AG04450 (cell line): ENCODE measurements at regions of chr11 and their contacts with region 1.

Region 1: DNA sequence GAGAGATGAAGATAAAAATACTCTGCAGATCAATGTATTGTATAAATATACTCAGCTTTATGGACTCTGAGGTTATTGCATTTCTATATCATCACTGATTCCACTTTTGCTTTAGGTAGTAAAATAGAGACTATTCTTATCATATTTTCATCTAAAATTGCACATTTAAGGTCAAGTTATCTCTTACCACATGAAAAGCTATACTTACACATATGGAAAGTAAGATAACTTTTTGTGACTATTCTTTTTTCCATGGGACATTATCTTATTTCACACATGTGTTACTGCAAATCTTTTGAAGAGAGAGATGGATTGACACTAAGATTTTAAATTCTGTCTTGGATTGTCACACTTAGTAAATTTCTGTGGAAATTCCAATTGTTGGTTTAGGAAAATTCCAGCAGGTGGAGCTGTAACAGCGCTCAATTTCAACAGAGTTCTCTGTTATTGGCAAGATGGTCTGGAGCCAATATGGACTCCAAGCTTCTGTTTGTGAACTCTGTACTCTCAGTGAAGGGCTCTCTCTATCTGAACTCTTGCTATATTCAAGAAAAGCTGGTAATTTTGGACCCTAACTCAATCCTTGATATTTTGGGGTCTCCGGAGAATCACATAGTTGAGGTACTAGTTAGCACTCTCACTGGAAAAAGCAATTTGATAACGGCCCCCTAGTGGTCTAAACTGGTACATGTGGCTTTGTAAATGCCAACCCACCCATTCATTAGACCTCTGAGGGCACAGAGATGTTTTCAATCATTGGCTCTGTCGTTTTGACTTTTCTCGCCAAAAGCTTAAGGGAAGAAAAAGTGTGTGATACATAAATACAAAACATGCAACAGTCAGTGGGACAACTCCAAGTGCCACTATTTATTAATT is 429.7 kb downstream of the ETS1 start:
- DNase-seq: peak; percentile 41
- H3K4me3 ChIP-seq: peak overlapping the region; percentile 38; the same call in 1 of the 2 replicates
- H3K27ac ChIP-seq: no peak overlapping the region
- H3K27me3 ChIP-seq: peaks cover 12% of the 10 kb centered on the region
- CTCF ChIP-seq: peak; percentile 82

Region 2: DNA sequence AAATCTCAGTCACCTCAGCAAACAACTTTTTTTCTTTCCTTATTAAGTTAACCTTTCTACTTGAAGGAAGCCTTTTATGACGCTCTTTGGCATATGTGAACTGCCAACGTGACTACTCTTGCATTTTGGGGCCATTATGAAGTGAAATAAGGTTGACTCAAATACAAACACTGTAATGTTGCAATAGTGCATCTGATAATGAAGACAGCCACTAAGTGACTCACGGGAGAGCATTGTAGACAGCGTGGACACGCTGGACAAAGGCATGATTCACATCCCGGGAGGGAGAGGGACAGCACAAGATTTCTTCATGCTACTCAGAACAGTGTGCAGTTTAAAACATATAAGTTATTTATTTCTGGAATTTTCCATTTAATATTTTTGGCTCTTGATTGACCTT is 131.1 kb before region 1 on chr11:
- CTCF ChIA-PET with region 1: interaction called, 170 read pairs
- POLR2A ChIA-PET with region 1: no interaction called
- DNase-seq: peak; percentile 76
- H3K4me3 ChIP-seq: no peak overlapping the region
- H3K27ac ChIP-seq: no peak overlapping the region
- H3K27me3 ChIP-seq: no peaks in the 10 kb centered on the region
- CTCF ChIP-seq: no peak

Region 3: GRCh38 chr11:128089962-128090361 is 67.7 kb before region 1 on chr11:
- CTCF ChIA-PET with region 1: no interaction called
- POLR2A ChIA-PET with region 1: no interaction called
- DNase-seq: no peak
- H3K4me3 ChIP-seq: no peak overlapping the region
- H3K27ac ChIP-seq: no peak overlapping the region
- H3K27me3 ChIP-seq: no peaks in the 10 kb centered on the region
- CTCF ChIP-seq: no peak

Region 4: DNA sequence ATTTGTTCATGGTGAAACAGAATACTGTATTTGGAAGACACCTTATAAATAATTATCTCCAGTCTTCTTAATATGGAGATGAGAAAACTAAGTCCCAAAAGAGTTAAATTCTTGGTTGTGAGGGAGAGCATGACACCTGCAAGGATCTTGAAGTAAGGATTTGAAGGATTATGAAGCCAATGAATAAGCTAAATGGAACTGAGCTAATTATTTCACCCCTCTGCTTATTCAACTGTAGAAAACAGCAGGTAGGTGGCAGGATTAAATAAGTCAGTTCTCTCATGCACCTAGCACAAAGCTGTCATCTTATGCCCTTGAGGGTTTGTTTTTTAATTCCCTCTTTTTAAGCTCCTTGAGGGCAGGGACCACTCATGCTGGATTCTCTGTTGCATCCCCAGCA is 27.6 kb before region 1 on chr11:
- CTCF ChIA-PET with region 1: interaction called, 13 read pairs
- POLR2A ChIA-PET with region 1: no interaction called
- DNase-seq: no peak
- H3K4me3 ChIP-seq: no peak overlapping the region
- H3K27ac ChIP-seq: no peak overlapping the region
- H3K27me3 ChIP-seq: peaks cover 2% of the 10 kb centered on the region
- CTCF ChIP-seq: no peak

Region 5: DNA sequence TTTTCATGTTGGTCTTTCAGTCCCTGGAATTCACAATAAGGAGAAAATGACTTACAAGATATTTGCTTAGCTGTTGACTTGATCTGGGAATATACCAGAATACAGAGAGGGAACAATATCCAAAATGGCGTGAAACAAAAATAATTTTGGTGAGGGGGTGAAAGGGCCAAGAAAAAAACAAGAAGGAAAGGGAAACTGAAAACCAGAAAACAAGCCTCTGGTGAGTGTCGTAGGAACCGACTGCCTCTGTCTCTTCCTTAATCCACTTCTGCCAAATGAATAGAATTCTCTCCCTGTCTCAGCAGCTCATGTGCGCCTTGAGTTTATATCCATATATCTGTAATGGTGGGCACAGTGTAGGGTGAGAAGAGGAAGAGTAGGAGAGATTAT is 62.1 kb after region 1 on chr11:
- CTCF ChIA-PET with region 1: interaction called, 13 read pairs
- POLR2A ChIA-PET with region 1: no interaction called
- DNase-seq: no peak
- H3K4me3 ChIP-seq: no peak overlapping the region
- H3K27ac ChIP-seq: no peak overlapping the region
- H3K27me3 ChIP-seq: no peaks in the 10 kb centered on the region
- CTCF ChIP-seq: no peak

Region 6: GRCh38 chr11:128630367-128631230 is 472.9 kb after region 1 on chr11:
- CTCF ChIA-PET with region 1: interaction called, 131 read pairs
- POLR2A ChIA-PET with region 1: no interaction called
- DNase-seq: peak; percentile 76
- H3K4me3 ChIP-seq: no peak overlapping the region
- H3K27ac ChIP-seq: no peak overlapping the region
- H3K27me3 ChIP-seq: peaks cover under 1% of the 10 kb centered on the region
- CTCF ChIP-seq: peak; percentile 94

Region 7: DNA sequence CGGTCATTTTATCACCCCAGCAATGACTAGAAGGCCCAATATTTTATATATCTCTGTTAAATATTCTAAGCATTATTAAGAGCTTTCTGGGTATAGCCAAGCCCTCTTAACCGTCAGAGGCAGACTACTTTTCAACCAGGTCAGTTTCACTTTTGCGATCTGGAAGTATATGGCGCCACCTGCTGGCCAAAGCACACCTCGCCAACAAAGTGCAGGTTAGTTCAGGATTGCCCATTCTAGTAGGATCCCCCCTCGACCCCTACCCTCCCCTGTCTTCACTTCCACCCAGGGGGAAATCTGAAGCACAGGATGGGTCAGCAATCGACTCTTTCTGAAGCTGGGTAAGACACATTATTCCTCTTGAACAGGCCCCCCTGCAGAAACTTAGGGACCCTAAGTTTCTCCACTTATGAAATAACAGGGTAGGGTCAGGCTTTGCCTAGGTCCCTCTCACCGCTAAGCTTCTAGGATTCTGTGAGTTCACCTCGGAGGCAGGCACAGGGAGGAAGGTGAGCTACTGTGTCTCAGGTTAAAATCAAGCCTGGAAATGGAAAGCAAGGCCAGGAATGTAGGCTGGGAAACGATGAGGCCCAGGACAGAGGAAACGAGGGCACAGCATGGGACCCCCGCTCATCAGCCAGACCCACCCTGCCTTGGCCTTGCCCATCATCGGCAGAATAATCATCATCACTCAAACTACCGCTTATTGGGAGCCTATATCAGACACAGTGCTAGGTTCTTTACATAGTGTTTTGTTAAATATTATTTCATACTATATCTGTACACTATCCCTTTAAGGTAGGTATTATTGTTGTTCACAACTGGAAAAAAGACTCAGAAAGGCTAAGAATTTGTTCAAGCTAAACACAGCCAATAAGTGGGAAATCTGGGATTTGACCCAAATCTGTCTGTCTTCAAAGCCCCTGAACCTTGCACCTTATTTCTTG is 673.8 kb after region 1 on chr11:
- CTCF ChIA-PET with region 1: interaction called, 140 read pairs
- POLR2A ChIA-PET with region 1: no interaction called
- DNase-seq: peak; percentile 76
- H3K4me3 ChIP-seq: no peak overlapping the region
- H3K27ac ChIP-seq: no peak overlapping the region
- H3K27me3 ChIP-seq: peaks cover 7% of the 10 kb centered on the region
- CTCF ChIP-seq: peak; percentile 84